Ascending aorta (tissue), 2 donors: ENCODE measurements at regions of chr15 and their contacts with region 1.

Region 1: DNA sequence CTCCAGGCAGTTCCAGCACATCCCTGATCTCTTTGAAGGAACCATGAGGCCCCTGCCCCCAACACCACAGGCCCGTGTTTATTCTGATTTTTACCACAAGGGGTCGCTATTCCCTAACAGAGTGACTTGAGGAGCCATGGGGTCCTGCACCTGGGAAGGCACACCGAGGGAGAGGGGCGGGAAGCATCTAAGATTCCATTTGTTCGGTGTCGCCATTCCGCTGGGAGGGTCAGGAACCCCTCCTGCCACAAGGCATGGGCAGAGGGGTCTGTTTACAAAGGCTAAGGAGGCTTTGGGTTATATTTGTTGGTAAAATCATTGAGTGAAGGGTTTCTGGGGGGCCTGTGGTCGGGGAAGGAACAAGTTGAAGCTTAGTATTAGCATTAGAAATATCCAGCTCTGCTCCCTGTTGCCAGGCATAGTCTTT is 77.1 kb downstream of the WDR76 start:
- DNase-seq: peak in 1 of 2 donors; percentile 69
- H3K4me3 ChIP-seq: no peak overlapping the region
- H3K27ac ChIP-seq: no peak overlapping the region
- H3K4me1 ChIP-seq: no peaks in the 10 kb centered on the region
- H3K27me3 ChIP-seq: no peaks in the 10 kb centered on the region
- CTCF ChIP-seq: peak; percentile 67 to 90 (median 79)

Region 2: GRCh38 chr15:44216958-44217357 is 313.1 kb after region 1 on chr15:
- intact Hi-C with region 1: loop called (anchors 2 kb)
- DNase-seq: no peak
- H3K4me3 ChIP-seq: no peak overlapping the region
- H3K27ac ChIP-seq: no peak overlapping the region
- H3K4me1 ChIP-seq: no peaks in the 10 kb centered on the region
- H3K27me3 ChIP-seq: no peaks in the 10 kb centered on the region
- CTCF ChIP-seq: no peak